ENCODE measurements at regions of chr9 and their contacts with region 1.

Region 1: GRCh38 chr9:109469646-109470358 is 28.3 kb downstream of the PTPN3 start:
- DNase-seq: peak; percentile 47
- H3K4me3 ChIP-seq: no peak overlapping the region
- H3K27ac ChIP-seq: no peak overlapping the region
- H3K27me3 ChIP-seq: no peaks in the 10 kb centered on the region
- CTCF ChIP-seq: peak; percentile 96

Region 2: GRCh38 chr9:109448223-109448622 is 21.6 kb before region 1 on chr9:
- CTCF ChIA-PET with region 1: interaction called, 133 read pairs
- POLR2A ChIA-PET with region 1: no interaction called
- DNase-seq: peak; percentile 20
- H3K4me3 ChIP-seq: no peak overlapping the region
- H3K27ac ChIP-seq: peak overlapping the region; percentile 49
- H3K27me3 ChIP-seq: no peaks in the 10 kb centered on the region
- CTCF ChIP-seq: no peak

Region 3: DNA sequence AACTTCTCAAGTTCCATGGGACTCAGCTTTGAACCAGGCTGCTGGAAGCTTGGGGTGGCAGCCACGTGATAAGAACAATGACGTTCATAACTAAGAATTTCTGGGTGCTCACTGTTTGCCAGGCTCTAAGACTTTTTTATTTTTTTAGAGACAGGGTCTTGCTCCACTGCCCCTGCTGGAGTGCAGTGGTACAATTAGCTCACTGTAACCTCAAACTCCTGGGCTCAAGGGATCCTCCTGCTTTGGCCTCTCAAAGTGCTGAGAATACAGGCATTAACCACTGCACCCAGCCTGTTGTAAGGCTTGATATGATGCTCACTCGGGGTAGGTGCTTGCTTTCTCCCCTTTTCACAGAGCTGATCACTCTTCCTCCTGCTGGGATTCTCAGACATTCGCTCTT is 10.4 kb before region 1 on chr9:
- CTCF ChIA-PET with region 1: interaction called, 14 read pairs
- POLR2A ChIA-PET with region 1: no interaction called
- DNase-seq: no peak
- H3K4me3 ChIP-seq: no peak overlapping the region
- H3K27ac ChIP-seq: no peak overlapping the region
- H3K27me3 ChIP-seq: no peaks in the 10 kb centered on the region
- CTCF ChIP-seq: no peak

Region 4: DNA sequence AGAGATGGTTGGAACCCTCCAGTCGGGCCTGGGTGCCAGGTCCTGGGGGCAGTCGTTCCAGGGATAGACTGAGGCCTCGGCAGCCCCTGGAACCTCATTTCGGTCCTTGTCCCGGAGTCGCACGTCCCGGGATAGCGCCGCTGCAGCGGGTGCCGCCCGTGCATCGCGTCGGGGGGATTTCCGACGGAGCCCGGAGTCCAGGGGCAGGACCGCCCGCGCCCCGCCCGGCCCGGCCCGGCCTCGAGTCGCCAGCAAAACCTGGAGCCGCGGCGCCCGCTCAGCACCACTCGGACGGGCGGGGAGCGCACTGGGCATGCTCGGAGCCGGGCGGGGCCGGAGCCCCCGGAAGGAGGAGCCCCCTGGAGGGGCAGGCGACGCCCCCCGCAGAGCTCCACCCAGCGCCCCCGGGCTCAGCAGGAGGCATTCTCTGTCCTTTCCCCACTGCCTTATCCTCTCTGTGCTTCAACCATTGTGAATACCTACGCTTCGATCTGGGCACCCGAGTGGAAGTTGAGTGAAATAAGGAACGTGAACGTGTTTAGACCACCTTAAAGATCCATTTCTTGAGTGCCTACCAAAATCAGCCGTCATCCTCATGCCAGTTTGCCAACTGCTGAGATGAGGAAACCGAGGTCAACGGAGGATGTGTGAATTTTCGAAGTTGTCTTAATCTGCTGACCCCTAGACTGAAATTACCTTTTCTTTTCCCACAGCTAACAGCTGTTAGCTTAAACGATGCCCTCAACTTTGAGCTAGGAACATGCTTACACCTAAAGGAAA is 30.0 kb after region 1 on chr9:
- CTCF ChIA-PET with region 1: interaction called, 18 read pairs
- POLR2A ChIA-PET with region 1: no interaction called
- DNase-seq: no peak
- H3K4me3 ChIP-seq: peak overlapping the region; percentile 42
- H3K27ac ChIP-seq: no peak overlapping the region
- H3K27me3 ChIP-seq: peaks cover 59% of the 10 kb centered on the region
- CTCF ChIP-seq: no peak

Measured in AG04450 (cell line).